Gastrocnemius medialis (tissue), 4 donors: ENCODE measurements at regions of chr12 and their contacts with region 1.

Region 1: DNA sequence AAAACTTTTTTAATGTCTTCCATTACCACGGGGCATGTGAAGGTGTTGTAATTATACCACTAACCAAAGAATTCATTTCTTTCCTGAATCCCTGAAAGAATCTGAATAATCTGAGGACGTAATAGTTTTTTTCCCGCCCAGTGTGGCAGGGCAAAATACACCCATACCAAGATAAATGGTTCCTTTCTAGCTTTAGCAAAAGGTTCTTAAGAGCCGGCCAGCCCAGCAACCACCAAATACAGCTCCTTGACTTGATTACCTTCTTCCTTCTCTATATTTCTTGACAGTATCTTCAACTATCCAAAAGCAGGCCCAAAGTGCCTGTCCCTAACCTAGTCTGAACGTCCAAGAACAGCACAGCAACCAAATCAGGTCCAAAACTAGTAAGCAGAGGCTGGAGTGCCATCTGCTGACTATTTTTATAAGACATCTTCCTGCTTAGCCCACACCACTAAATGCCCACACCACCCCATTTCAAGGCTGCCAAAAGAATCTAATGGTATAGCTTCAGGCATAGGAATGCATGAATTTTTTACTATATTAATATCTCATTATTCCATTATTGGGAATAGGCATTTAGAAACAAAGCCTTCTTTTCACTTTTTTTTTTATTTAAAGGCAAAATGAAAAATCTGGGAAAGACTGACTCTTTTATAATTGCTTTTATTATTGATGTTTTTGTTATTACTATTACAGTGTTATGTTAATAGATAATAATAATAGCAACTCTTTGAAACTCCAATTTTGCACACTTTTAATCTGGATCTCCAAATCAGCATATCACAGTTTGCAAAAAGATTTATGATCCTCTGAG is 524.4 kb downstream of the MED13L start:
- DNase-seq: peak; percentile 7 to 17
- ATAC-seq: peak; percentile 74 to 85
- H3K4me3 ChIP-seq: no peak overlapping the region
- H3K27ac ChIP-seq: no peak overlapping the region
- H3K4me1 ChIP-seq: peaks cover 0 to 6% of the 10 kb centered on the region in 2 donors
- H3K27me3 ChIP-seq: peaks cover 0 to 13% (median 8%) of the 10 kb centered on the region in 3 donors
- CTCF ChIP-seq: peak; percentile 46 to 71 (median 57)
- POLR2A ChIP-seq: no peak

Region 2: DNA sequence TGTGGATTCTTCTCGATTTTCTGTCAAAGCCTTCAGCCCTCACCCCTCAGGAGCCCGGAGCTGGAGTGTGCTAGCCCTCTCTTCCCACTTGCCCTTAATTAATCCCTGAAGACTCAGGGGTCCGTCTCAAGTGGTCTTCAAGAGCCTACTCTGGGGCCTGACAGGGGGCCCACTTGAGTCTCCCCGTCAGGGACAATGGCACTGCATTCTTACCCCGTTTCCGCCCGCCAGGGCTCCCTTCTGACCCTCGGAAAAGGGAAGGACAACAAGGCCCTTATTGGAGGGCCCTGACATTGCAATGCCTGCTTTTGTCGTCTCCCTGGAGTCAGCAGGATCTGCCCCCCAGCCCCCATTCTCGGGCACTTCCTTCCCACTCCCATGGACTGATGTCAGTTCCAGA is 1103.5 kb before region 1 on chr12:
- in situ Hi-C with region 1: loop called in 1 of 4 experiments (anchors 10 kb)
- intact Hi-C with region 1: no loop called
- DNase-seq: no peak
- ATAC-seq: no peak
- H3K4me3 ChIP-seq: no peak overlapping the region
- H3K27ac ChIP-seq: no peak overlapping the region
- H3K4me1 ChIP-seq: no peaks in the 10 kb centered on the region
- H3K27me3 ChIP-seq: no peaks in the 10 kb centered on the region
- CTCF ChIP-seq: no peak
- POLR2A ChIP-seq: no peak

Region 3: DNA sequence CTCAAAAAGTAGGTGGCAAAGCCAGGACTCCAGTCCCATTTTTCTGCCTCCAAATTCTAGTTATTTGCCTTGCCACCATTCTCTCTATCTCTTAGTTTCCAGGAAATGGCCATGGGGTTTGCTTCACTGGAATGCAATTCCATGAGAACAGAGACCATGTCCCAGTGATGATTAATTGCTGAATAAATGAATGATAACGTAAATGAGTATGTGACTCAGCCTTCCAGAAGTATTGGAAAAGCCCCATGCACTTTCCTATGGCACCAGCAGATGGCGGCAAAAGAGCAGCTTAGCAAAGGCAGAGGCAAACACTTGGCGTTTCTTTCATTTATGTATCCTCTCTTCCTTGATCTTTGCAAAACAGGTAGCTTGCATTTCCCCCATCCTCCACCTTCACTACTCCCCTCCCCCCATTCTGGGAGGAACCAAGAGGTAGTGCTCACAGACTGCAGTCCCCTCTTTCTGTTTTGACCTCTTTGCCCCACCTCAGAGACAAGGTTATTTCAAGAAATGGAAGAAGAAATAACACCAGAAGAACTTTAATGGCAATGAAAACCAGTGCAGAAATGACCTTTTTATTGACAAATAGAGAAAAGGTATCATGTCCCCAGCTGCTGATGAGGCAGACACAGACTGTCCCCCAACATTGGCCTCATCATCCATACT is 1090.5 kb before region 1 on chr12:
- in situ Hi-C with region 1: loop called (anchors 5 to 10 kb)
- intact Hi-C with region 1: loop called (anchors 1 kb)
- DNase-seq: peak; percentile 50 to 63
- ATAC-seq: peak; percentile 52 to 65
- H3K4me3 ChIP-seq: no peak overlapping the region
- H3K27ac ChIP-seq: no peak overlapping the region
- H3K4me1 ChIP-seq: peaks cover 0 to under 1% of the 10 kb centered on the region in 2 donors
- H3K27me3 ChIP-seq: peaks cover 20 to 45% (median 41%) of the 10 kb centered on the region in 3 donors
- CTCF ChIP-seq: peak; percentile 79 to 93 (median 87)
- POLR2A ChIP-seq: no peak

Region 4: GRCh38 chr12:114668151-114668885 is 1084.8 kb before region 1 on chr12:
- in situ Hi-C with region 1: loop called (anchors 5 to 10 kb)
- intact Hi-C with region 1: loop called (anchors 1 kb)
- DNase-seq: peak; percentile 63 to 71
- ATAC-seq: peak; percentile 86 to 88
- H3K4me3 ChIP-seq: peak overlapping the region; percentile 52 to 73 (median 60)
- H3K27ac ChIP-seq: peak overlapping the region; percentile 42 to 80 (median 70)
- H3K4me1 ChIP-seq: peaks cover 2 to 4% of the 10 kb centered on the region in 2 donors
- H3K27me3 ChIP-seq: peaks cover 14 to 41% (median 40%) of the 10 kb centered on the region in 3 donors
- CTCF ChIP-seq: peak; percentile 40 to 73 (median 71)
- POLR2A ChIP-seq: no peak

Region 5: GRCh38 chr12:115817389-115817788 is 64.3 kb after region 1 on chr12:
- in situ Hi-C with region 1: no loop called
- intact Hi-C with region 1: no loop called
- DNase-seq: no peak
- ATAC-seq: no peak
- H3K4me3 ChIP-seq: no peak overlapping the region
- H3K27ac ChIP-seq: no peak overlapping the region
- H3K4me1 ChIP-seq: no peaks in the 10 kb centered on the region
- H3K27me3 ChIP-seq: no peaks in the 10 kb centered on the region
- CTCF ChIP-seq: no peak
- POLR2A ChIP-seq: no peak

Region 6: GRCh38 chr12:115885038-115885690 is 132.0 kb after region 1 on chr12:
- in situ Hi-C with region 1: no loop called
- intact Hi-C with region 1: no loop called
- DNase-seq: no peak
- ATAC-seq: no peak
- H3K4me3 ChIP-seq: no peak overlapping the region
- H3K27ac ChIP-seq: no peak overlapping the region
- H3K4me1 ChIP-seq: no peaks in the 10 kb centered on the region
- H3K27me3 ChIP-seq: peaks cover 0 to 6% (median 3%) of the 10 kb centered on the region in 3 donors
- CTCF ChIP-seq: no peak
- POLR2A ChIP-seq: no peak